H1 (cell line): ENCODE measurements at regions of chr6 and their contacts with region 1.

Region 1: DNA sequence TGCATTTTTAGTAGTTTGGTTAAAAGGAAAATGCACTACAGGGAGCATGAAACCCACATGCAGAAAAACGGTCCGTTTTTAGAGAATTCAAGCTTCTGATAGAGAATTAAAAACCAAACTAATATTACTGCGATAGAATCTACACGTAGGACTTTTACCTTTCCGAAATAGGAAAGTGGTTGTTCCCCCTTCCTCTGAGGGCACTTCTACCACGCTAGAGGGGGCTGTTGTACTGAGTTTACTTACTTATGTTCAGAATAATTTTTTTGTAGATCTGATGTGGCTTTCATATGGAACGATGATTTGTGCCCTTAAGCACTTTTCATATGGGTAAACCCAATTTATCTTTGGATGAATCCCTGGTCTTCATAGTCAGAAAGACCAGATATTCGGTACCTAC is 264.3 kb upstream of the PLN start:
- DNase-seq: no peak
- H3K4me3 ChIP-seq: no peak overlapping the region
- H3K27ac ChIP-seq: no peak overlapping the region
- H3K4me1 ChIP-seq: peaks cover 0 to 12% (median 5%) of the 10 kb centered on the region in 4 experiments; a peak in 4 of 7 replicates
- H3K27me3 ChIP-seq: no peaks in the 10 kb centered on the region
- CTCF ChIP-seq: peak in 2 of 3 experiments; percentile 64 to 71; a peak in 3 of 4 replicates
- EP300 ChIP-seq: no peak
- POLR2A ChIP-seq: no peak
- RAD21 ChIP-seq: peak; percentile 83 to 86

Region 2: DNA sequence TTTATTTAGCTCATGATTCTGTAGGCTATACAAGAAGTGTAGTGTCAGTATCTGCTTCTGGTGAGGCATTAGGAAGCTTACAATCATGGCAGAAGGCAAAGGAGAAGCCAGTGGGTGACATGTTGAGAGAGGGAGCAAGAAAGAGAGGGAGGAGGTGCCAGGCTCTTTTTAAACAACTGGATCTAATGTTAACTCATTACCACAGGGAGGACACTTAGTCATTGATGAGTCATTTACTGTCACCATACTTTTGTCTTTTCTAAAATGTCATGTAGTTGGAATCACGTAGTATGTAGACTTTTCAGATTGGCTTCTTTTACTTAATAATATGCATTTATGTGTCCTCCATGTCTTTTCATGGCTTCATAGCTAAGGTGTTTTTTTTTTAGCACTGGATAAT is 550.4 kb before region 1 on chr6:
- CTCF ChIA-PET with region 1: no interaction called
- POLR2A ChIA-PET with region 1: no interaction called
- DNase-seq: no peak
- H3K4me3 ChIP-seq: no peak overlapping the region
- H3K27ac ChIP-seq: no peak overlapping the region
- H3K4me1 ChIP-seq: no peaks in the 10 kb centered on the region
- H3K27me3 ChIP-seq: no peaks in the 10 kb centered on the region
- CTCF ChIP-seq: no peak
- EP300 ChIP-seq: no peak
- POLR2A ChIP-seq: no peak
- RAD21 ChIP-seq: no peak

Region 3: GRCh38 chr6:118309337-118310093 is 25.7 kb after region 1 on chr6:
- CTCF ChIA-PET with region 1: interaction called, 23 read pairs
- POLR2A ChIA-PET with region 1: no interaction called
- DNase-seq: no peak
- H3K4me3 ChIP-seq: no peak overlapping the region
- H3K27ac ChIP-seq: no peak overlapping the region
- H3K4me1 ChIP-seq: peaks cover 0 to 3% (median 0%) of the 10 kb centered on the region in 4 experiments; a peak in 2 of 7 replicates
- H3K27me3 ChIP-seq: no peaks in the 10 kb centered on the region; a peak in 1 of 7 replicates
- CTCF ChIP-seq: no peak
- EP300 ChIP-seq: no peak
- POLR2A ChIP-seq: no peak
- RAD21 ChIP-seq: no peak

Region 4: DNA sequence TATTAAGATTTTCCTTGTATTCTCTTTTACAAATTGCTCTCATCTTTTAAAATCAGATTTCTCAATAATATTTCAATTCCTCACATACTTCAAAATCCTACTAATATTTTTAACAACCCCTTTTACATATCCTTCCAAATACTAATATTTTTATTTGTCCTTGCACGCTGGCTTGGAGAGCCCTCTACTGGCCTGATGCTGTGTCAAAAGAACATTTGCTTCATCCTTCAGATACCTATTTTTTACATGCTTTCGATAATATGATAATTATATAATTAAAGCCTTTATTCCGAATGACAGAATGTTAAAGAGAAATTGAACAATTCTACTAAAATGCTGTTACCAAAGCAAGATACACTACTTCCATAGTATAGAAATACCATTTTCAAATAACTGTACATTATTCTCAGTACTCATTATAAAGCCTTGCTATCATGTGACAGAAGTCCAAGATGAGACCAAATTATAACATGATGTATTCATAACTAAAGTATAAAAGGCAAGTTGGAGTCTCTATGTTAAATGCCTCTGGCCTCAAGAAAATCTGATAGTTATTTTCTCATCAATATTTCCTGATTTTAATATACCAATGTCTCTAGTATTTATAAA is 225.3 kb after region 1 on chr6:
- CTCF ChIA-PET with region 1: interaction called, 52 read pairs
- POLR2A ChIA-PET with region 1: no interaction called
- DNase-seq: no peak
- H3K4me3 ChIP-seq: no peak overlapping the region
- H3K27ac ChIP-seq: no peak overlapping the region
- H3K4me1 ChIP-seq: peaks cover 0 to 4% (median 0%) of the 10 kb centered on the region in 4 experiments; a peak in 1 of 7 replicates
- H3K27me3 ChIP-seq: no peaks in the 10 kb centered on the region
- CTCF ChIP-seq: peak in 2 of 3 experiments; percentile 45 to 48; a peak in 3 of 4 replicates
- EP300 ChIP-seq: no peak
- POLR2A ChIP-seq: no peak
- RAD21 ChIP-seq: peak; percentile 71 to 72

Region 5: GRCh38 chr6:118551063-118552053 is 267.6 kb after region 1 on chr6:
- CTCF ChIA-PET with region 1: interaction called, 31 read pairs
- POLR2A ChIA-PET with region 1: no interaction called
- DNase-seq: no peak
- H3K4me3 ChIP-seq: no peak overlapping the region
- H3K27ac ChIP-seq: no peak overlapping the region
- H3K4me1 ChIP-seq: no peaks in the 10 kb centered on the region; a peak in 1 of 7 replicates
- H3K27me3 ChIP-seq: no peaks in the 10 kb centered on the region
- CTCF ChIP-seq: peak in 2 of 3 experiments; percentile 37 to 55; a peak in 2 of 4 replicates
- EP300 ChIP-seq: no peak
- POLR2A ChIP-seq: no peak
- RAD21 ChIP-seq: peak; percentile 80

Region 6: DNA sequence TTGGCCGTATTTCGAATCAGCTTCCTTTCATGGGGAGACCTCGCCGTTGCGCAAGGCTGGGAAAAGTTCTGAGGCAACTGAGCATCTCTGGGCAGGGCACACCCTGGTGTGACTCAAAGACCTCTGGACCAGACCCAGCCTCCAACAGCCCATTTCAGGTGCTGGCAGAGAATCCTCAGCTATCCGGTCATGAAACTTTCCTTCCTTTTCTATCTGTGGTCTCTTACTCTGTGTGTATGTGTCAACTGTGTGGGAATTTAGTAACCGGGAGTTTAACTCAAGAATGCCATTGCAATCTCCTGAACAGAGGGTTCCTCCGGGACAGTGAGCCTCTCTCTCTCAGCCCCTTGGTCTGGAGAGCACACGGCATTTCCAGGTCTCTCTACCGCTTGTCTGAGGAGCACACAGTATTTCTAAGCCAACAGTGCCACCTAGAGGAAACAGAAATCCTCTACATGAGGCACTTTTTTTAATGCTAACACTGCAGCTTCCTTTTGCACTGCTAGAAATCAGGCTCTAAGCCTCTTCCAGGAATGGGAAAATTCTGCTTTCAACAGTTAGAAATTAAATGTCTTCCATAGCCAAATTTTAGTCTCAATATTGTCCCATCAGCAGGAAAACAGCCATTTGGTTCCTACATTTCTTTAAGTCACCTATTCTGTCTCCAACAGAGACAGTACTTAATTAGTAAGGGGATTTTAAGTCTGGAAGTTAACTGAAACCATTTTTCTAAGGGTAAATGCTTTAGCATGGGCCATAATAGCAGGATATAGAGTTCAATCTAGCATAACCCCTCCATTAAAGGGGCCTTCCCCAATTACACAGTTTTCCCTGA is 297.0 kb after region 1 on chr6:
- CTCF ChIA-PET with region 1: interaction called, 47 read pairs
- POLR2A ChIA-PET with region 1: no interaction called
- DNase-seq: peak in 1 of 2 experiments; percentile 15
- H3K4me3 ChIP-seq: no peak overlapping the region
- H3K27ac ChIP-seq: no peak overlapping the region; the same call in 1 of the 2 replicates
- H3K4me1 ChIP-seq: peaks cover 0 to 10% (median 0%) of the 10 kb centered on the region in 4 experiments; a peak in 2 of 7 replicates
- H3K27me3 ChIP-seq: no peaks in the 10 kb centered on the region
- CTCF ChIP-seq: peak in 2 of 3 experiments; percentile 82 to 85; a peak in 3 of 4 replicates
- EP300 ChIP-seq: no peak
- POLR2A ChIP-seq: no peak
- RAD21 ChIP-seq: peak; percentile 95 to 96